Natural killer cell (primary cell): ENCODE measurements at regions of chr6 and their contacts with region 1.

Region 1: DNA sequence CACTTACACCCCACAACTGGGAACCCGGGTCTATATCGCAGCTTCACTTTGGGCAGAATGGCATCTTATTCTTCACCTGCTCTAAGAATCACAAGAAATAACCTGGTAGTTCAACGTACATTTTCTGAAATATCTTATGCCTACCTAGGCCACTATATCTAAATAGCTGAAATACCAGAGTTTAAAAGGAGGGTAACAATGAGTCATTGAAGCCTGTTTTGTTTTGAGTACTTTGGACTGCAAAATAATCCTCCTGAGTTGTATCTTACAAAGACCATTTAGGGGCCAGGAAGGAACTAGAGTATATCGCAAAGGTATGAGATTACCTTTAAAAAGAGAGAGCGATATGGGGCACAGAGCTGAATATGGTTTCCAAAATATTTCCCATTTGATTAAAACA is 96.7 kb upstream of the NUP153 start:
- DNase-seq: no peak
- ATAC-seq: no peak
- H3K4me3 ChIP-seq: no peak overlapping the region
- H3K4me3 Mint-ChIP-seq: no peak overlapping the region
- H3K27ac ChIP-seq: no peak overlapping the region
- H3K27ac Mint-ChIP-seq: no peak overlapping the region
- H3K4me1 ChIP-seq: no peaks in the 10 kb centered on the region
- H3K4me1 Mint-ChIP-seq: peaks cover 4 to 6% of the 10 kb centered on the region in 2 donors
- H3K27me3 ChIP-seq: no peaks in the 10 kb centered on the region
- H3K27me3 Mint-ChIP-seq: no peaks in the 10 kb centered on the region
- CTCF ChIP-seq: no peak

Region 2: DNA sequence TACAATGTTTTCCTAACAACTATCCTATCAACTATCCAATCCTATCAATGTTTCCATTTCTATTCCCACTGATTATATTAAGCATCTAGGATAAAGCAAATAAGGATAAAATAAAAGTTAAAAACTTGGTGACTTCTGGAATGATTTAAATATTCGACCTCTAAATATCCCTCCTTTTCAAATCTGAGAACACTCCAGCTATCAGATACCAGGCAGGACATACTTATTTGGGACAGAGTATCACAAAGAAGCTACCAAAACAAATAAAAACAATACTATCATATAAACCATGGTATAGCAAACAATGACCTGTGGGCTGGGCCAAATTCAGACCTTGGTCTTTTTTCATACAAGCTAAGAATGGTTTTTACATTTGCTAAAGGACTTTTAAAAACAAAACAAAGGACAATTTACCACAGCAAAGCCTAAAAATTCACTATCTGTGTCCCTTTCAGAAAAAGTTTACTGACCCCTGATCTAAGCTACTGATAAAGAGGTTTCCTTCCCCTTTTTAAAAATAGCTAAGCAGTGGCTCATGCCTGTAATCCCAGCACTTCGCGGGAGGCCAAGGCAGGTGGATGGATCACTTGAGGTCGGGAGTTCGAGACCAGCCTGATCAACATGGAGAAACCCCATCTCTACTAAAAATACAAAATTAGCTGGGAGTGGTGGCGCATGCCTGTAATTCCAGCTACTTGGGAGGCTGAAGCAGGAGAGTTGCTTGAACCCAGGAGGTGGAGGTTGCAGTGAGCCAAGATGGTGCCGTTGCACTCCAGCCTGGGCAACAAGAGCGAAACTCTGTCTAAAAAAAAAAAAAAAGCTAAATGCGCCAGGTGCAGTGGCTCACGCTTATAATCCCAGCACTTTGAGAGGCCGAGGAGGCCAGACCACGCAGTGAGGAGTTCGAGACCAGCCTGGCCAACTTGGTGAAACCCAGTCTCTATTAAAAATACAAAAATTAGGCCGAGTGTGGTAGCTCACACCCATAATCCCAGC is 102.7 kb before region 1 on chr6:
- intact Hi-C with region 1: loop called (anchors 5 kb)
- DNase-seq: no peak
- ATAC-seq: no peak
- H3K4me3 ChIP-seq: no peak overlapping the region
- H3K4me3 Mint-ChIP-seq: peak overlapping the region; percentile 35
- H3K27ac ChIP-seq: peak overlapping the region; percentile 8
- H3K27ac Mint-ChIP-seq: peak overlapping the region; percentile 71 to 89
- H3K4me1 ChIP-seq: peaks cover 46% of the 10 kb centered on the region
- H3K4me1 Mint-ChIP-seq: peaks cover 41% of the 10 kb centered on the region in 2 donors
- H3K27me3 ChIP-seq: no peaks in the 10 kb centered on the region
- H3K27me3 Mint-ChIP-seq: no peaks in the 10 kb centered on the region
- CTCF ChIP-seq: no peak